ENCODE measurements at regions of chr19 and their contacts with region 1.

Region 1: GRCh38 chr19:21328885-21329605 is at the start of gene ZNF708:
- DNase-seq: peak; percentile 41 to 96 (median 59)
- ATAC-seq: peak; percentile 91
- H3K4me3 ChIP-seq: peak within 1 kb of the TSS; percentile 99
- H3K4me3 Mint-ChIP-seq: peak within 1 kb of the TSS; percentile 96
- H3K27ac ChIP-seq: peak within 1 kb of the TSS; percentile 83 to 99
- H3K27ac Mint-ChIP-seq: peak within 1 kb of the TSS; percentile 98
- H3K4me1 ChIP-seq: peaks cover 22% of the 10 kb centered on the region
- H3K4me1 Mint-ChIP-seq: peaks cover 50% of the 10 kb centered on the region
- H3K27me3 ChIP-seq: no peaks in the 10 kb centered on the region
- H3K27me3 Mint-ChIP-seq: no peaks in the 10 kb centered on the region
- CTCF ChIP-seq: no peak
- total RNA-seq, gene ZNF708: 15.5 to 16.4 TPM

Region 2: DNA sequence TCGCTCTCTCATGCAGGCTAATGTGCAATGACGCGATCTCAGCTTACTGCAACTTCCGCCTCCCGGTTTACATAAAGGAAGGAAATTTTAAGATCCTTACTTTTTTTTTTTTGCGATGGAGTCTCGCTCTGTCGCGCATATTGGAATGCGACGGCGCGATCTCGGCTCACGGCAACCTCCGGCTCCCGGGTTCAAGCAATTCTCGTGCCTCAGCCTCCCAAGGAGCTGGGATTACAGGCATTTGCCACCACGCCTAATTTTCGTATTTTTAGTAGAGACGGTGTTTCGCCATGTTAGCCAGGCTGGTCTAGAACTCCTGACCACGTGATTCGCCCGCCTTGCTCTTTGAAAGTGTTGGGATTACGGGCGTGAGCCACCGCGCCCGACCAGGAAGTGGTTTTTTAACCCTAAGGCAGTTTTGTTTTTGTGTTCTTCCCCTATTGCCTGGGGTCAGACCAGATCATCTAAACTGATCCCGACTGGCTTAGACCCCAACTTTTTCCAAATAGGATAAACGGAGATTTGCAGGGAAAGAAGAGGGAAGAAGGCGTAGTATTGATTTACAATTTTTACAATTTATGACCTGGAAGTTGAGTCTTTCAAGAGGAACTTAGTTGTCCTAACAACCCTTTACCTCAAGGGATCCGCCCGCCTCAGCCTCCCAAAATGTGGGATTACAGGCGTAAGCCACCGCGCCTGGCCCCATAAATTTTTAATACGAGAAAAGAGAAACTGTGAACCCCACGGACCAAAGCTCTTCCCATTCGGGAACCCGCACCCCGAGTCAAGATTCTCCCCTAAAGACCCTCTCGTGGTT is 905.5 kb before region 1 on chr19:
- CTCF ChIA-PET with region 1: no interaction called
- POLR2A ChIA-PET with region 1: interaction called, 10 read pairs
- intact Hi-C with region 1: no loop called
- DNase-seq: peak in 9 of 14 experiments; percentile 6 to 64 (median 34)
- ATAC-seq: no peak
- H3K4me3 ChIP-seq: peak overlapping the region; percentile 83
- H3K4me3 Mint-ChIP-seq: peak overlapping the region; percentile 97
- H3K27ac ChIP-seq: peak overlapping the region; percentile 57 to 65
- H3K27ac Mint-ChIP-seq: peak overlapping the region; percentile 90
- H3K4me1 ChIP-seq: peaks cover 9% of the 10 kb centered on the region
- H3K4me1 Mint-ChIP-seq: peaks cover 15% of the 10 kb centered on the region
- H3K27me3 ChIP-seq: no peaks in the 10 kb centered on the region
- H3K27me3 Mint-ChIP-seq: no peaks in the 10 kb centered on the region
- CTCF ChIP-seq: no peak

Region 3: DNA sequence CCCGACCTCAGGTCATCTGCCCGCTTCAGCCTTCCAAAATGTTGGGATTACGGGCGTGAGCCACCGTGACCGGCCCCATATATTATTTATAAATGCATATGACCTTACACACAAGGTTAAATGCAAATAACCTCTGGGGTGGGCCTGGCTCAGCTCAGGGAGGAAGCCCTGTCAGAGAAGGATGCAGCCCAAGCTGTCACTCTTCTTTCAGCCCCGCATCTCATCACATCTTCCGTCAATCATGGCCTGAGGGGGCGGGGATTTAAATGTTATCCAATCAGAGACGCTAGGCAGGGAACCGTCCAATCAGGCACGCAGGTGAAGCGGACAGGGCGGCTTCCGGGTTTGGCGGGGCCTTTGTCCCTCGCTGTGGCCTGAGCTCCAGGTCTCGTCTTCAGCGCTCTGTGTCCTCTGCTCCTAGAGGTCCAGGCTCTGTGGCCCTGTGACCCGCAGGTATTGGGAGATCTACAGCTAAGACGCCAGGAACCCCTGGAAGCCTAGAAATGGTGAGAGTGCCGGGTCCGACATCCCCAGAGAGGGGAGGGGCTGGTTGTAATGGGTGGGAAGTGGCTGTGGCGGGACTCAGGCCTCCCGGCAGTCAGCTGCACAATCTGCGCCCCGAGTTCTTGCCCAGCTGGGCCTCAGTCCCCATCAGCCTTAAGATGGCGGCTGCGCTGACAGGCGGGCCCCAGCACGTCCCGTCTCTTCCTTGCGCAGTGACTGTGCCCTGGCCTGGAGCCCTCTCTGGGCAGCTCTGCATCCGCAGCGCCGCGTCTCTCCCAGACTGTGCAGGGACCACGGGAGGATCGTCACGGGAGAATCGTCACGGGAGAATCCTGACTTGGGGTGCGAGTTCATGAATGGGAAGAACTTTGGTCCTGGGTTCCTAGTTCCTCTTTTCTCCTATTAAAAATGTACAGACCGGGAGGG is 308.5 kb before region 1 on chr19 and contains the start of gene ZNF430:
- CTCF ChIA-PET with region 1: no interaction called
- POLR2A ChIA-PET with region 1: interaction called, 19 read pairs
- intact Hi-C with region 1: no loop called
- DNase-seq: peak; percentile 82 to 98 (median 87)
- ATAC-seq: peak; percentile 95
- H3K4me3 ChIP-seq: peak within 1 kb of the TSS; percentile 98
- H3K4me3 Mint-ChIP-seq: peak within 1 kb of the TSS; percentile 98
- H3K27ac ChIP-seq: peak within 1 kb of the TSS; percentile 86 to 93
- H3K27ac Mint-ChIP-seq: peak within 1 kb of the TSS; percentile 100
- H3K4me1 ChIP-seq: peaks cover 29% of the 10 kb centered on the region
- H3K4me1 Mint-ChIP-seq: peaks cover 52% of the 10 kb centered on the region
- H3K27me3 ChIP-seq: no peaks in the 10 kb centered on the region
- H3K27me3 Mint-ChIP-seq: no peaks in the 10 kb centered on the region
- CTCF ChIP-seq: no peak
- total RNA-seq, gene ZNF430: 40.5 to 43.8 TPM

Region 4: DNA sequence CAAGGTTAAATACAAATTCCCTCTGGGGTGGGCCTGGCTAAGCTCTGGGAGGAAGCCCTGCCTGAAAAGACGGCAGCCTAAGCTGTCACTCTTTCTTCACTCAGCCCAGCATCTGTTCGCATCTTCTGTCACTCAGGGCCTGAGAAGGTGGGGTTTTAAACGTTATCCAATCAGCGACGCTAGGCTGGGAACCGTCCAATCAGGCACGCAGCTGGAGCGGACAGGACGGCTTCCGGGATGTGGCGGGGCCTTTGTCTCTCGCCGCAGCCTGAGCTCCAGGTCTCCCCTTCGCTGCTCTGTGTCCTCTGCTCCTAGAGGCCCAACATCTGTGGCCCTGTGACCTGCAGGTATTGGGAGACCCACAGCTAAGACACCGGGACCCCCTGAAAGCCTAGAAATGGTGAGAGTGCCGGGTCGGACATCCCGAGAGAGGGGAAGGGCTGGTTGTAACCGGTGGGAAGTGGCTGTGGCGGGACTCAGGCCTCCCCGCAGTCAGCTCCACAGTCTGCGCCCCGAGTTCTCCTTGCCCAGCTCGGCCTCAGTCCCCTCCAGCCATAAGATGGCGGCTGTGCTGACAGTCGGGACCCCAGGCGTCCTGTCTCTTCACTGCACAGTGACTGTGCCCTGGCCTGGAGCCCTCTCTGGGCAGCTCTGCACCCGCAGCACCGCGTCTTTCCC is 187.1 kb before region 1 on chr19 and contains the start of gene ZNF431:
- CTCF ChIA-PET with region 1: no interaction called
- POLR2A ChIA-PET with region 1: interaction called, 15 read pairs
- intact Hi-C with region 1: loop called in 1 of 2 experiments (anchors 5 kb)
- DNase-seq: peak; percentile 79 to 96 (median 84)
- ATAC-seq: peak; percentile 99
- H3K4me3 ChIP-seq: peak within 1 kb of the TSS; percentile 67
- H3K4me3 Mint-ChIP-seq: peak within 1 kb of the TSS; percentile 95
- H3K27ac ChIP-seq: peak within 1 kb of the TSS; percentile 25 to 37
- H3K27ac Mint-ChIP-seq: peak within 1 kb of the TSS; percentile 91
- H3K4me1 ChIP-seq: peaks cover 8% of the 10 kb centered on the region
- H3K4me1 Mint-ChIP-seq: peaks cover 45% of the 10 kb centered on the region
- H3K27me3 ChIP-seq: no peaks in the 10 kb centered on the region
- H3K27me3 Mint-ChIP-seq: no peaks in the 10 kb centered on the region
- CTCF ChIP-seq: no peak
- total RNA-seq, gene ZNF431: 24.6 to 25.9 TPM

Region 5: DNA sequence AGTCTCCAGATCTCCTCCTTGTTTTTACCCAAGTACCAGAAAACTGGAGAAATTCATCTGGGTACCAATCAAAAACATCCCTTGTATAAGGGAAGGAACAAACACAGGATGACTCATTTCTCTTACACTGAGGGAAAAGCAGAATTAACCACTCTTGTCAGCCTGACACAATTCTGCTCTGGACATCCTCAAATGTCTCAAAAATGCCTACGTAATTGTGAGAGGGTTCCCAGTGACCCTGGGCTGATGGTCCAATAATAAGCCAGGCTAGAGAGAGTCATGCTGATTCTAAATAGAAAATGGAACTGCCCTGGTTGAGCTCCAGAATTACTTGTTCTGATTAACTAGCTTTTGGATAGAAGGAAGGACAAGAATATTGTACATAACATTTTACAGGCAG is 14.4 kb before region 1 on chr19:
- CTCF ChIA-PET with region 1: no interaction called
- POLR2A ChIA-PET with region 1: interaction called, 11 read pairs
- intact Hi-C with region 1: no loop called
- DNase-seq: peak in 1 of 14 experiments; percentile 34
- ATAC-seq: no peak
- H3K4me3 ChIP-seq: no peak overlapping the region
- H3K4me3 Mint-ChIP-seq: no peak overlapping the region
- H3K27ac ChIP-seq: no peak overlapping the region
- H3K27ac Mint-ChIP-seq: peak overlapping the region; percentile 46
- H3K4me1 ChIP-seq: no peaks in the 10 kb centered on the region
- H3K4me1 Mint-ChIP-seq: peaks cover 58% of the 10 kb centered on the region
- H3K27me3 ChIP-seq: no peaks in the 10 kb centered on the region
- H3K27me3 Mint-ChIP-seq: no peaks in the 10 kb centered on the region
- CTCF ChIP-seq: no peak

Region 6: DNA sequence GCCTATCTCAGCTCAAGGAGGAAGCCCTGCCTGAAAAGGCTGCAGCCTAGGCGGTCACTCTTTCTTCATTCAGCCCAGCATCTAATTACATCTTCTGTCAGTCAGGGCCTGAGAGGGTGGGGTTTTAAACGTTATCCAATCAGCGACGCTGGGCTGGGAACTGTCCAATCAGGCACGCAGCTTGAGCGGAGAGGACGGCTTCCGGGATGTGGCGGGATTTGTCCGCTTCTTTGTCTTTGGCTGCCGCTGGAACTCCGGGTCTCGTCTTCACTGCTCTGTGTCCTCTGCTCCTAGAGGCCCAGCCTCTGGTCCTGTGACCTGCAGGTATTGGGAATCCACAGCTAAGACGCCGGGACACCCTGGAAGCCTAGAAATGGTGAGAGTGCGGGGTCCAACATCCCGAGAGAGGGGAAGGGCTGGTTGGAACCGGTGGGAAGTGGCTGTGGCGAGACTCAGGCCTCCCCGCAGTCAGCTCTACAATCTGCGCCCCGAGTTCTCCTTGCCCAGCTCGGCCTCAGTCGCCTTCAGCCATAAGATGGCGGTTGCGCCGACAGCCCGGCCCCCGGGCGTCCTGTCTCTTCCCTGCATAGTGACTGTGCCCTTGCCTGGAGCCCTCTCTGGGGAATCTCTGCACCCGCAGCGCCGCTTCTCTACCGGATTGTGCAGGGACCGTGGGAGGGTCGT is 29.9 kb after region 1 on chr19 and contains the start of gene ZNF738:
- CTCF ChIA-PET with region 1: no interaction called
- POLR2A ChIA-PET with region 1: interaction called, 29 read pairs
- intact Hi-C with region 1: loop called in 1 of 2 experiments (anchors 5 kb)
- DNase-seq: peak; percentile 69 to 92 (median 74)
- ATAC-seq: peak; percentile 96
- H3K4me3 ChIP-seq: peak within 1 kb of the TSS; percentile 78
- H3K4me3 Mint-ChIP-seq: peak within 1 kb of the TSS; percentile 100
- H3K27ac ChIP-seq: peak within 1 kb of the TSS; percentile 46 to 63
- H3K27ac Mint-ChIP-seq: peak within 1 kb of the TSS; percentile 94
- H3K4me1 ChIP-seq: no peaks in the 10 kb centered on the region
- H3K4me1 Mint-ChIP-seq: peaks cover 18% of the 10 kb centered on the region
- H3K27me3 ChIP-seq: no peaks in the 10 kb centered on the region
- H3K27me3 Mint-ChIP-seq: no peaks in the 10 kb centered on the region
- CTCF ChIP-seq: no peak
- total RNA-seq, gene ZNF738: 4.7 to 5.0 TPM

Region 7: GRCh38 chr19:21463449-21464105 is 134.5 kb after region 1 on chr19:
- CTCF ChIA-PET with region 1: no interaction called
- POLR2A ChIA-PET with region 1: no interaction called
- intact Hi-C with region 1: no loop called
- DNase-seq: peak in 5 of 14 experiments; percentile 7 to 54 (median 47)
- ATAC-seq: peak; percentile 90
- H3K4me3 ChIP-seq: peak overlapping the region; percentile 56
- H3K4me3 Mint-ChIP-seq: peak overlapping the region; percentile 85
- H3K27ac ChIP-seq: no peak overlapping the region
- H3K27ac Mint-ChIP-seq: no peak overlapping the region
- H3K4me1 ChIP-seq: no peaks in the 10 kb centered on the region
- H3K4me1 Mint-ChIP-seq: no peaks in the 10 kb centered on the region
- H3K27me3 ChIP-seq: peaks cover 0 to 5% of the 10 kb centered on the region in 2 experiments
- H3K27me3 Mint-ChIP-seq: peaks cover 5% of the 10 kb centered on the region
- CTCF ChIP-seq: no peak

Region 8: GRCh38 chr19:21835810-21836444 is 506.9 kb after region 1 on chr19 and contains the start of gene ZNF43:
- CTCF ChIA-PET with region 1: no interaction called
- POLR2A ChIA-PET with region 1: interaction called, 12 read pairs
- intact Hi-C with region 1: loop called in 1 of 2 experiments (anchors 10 kb)
- DNase-seq: peak; percentile 87 to 97 (median 91)
- ATAC-seq: peak; percentile 98
- H3K4me3 ChIP-seq: peak within 1 kb of the TSS; percentile 81
- H3K4me3 Mint-ChIP-seq: peak within 1 kb of the TSS; percentile 97
- H3K27ac ChIP-seq: peak within 1 kb of the TSS; percentile 82 to 83
- H3K27ac Mint-ChIP-seq: peak within 1 kb of the TSS; percentile 94
- H3K4me1 ChIP-seq: peaks cover 14% of the 10 kb centered on the region
- H3K4me1 Mint-ChIP-seq: peaks cover 33% of the 10 kb centered on the region
- H3K27me3 ChIP-seq: no peaks in the 10 kb centered on the region
- H3K27me3 Mint-ChIP-seq: no peaks in the 10 kb centered on the region
- CTCF ChIP-seq: no peak
- total RNA-seq, gene ZNF43: 26.1 to 30.2 TPM